ENCODE measurements at regions of chr3 and their contacts with region 1.

Region 1: DNA sequence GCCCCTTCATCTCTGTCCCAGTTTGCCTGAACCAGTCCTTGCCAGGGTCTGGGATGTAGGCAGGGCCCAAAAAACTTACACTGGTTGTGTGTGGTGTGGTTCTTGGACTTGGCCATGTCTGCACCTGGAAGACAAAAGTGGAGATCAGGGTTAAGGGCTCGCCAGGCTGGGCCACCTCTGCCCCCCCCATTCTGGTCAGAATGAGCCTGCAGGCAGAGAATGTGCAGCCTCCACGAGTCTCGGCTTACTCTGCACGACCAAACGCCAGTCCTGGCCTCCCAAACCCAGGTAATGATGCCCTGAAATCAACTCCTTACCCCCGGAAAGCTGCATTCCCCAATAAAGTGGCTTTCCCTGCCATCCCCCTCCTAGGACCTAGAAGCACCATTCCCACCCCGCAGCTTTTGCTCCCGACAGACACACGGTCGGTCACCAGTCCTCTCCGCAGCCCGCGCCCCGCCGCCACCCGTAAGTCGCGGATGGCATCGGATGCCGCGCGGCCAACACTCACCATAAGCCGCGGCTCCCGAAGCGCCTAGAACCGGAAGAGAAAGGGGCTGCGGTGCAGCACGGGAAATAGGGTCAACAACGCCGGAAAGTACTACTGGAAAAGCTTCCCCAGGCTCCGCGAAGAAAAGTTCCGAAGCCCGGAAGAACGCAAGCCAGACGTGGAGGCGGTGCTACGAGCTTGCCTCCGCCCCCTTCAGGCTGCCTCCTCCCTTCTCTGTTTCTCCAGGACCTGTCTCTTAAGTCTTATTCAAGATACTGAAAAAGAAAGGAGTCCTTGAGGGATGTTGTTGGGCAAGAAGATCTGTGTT is at the start of gene RPL29:
- DNase-seq: peak; percentile 90
- ATAC-seq: peak; percentile 72
- H3K4me3 ChIP-seq: peak within 1 kb of the TSS; percentile 82 to 100
- H3K27ac ChIP-seq: peak within 1 kb of the TSS; percentile 88
- H3K4me1 ChIP-seq: peaks cover 13 to 46% of the 10 kb centered on the region in 2 experiments
- H3K27me3 ChIP-seq: no peaks in the 10 kb centered on the region
- CTCF ChIP-seq: no peak
- POLR2A ChIP-seq: peak; percentile 92
- RAD21 ChIP-seq: no peak
- total RNA-seq, gene RPL29: 1,880 TPM

Region 2: DNA sequence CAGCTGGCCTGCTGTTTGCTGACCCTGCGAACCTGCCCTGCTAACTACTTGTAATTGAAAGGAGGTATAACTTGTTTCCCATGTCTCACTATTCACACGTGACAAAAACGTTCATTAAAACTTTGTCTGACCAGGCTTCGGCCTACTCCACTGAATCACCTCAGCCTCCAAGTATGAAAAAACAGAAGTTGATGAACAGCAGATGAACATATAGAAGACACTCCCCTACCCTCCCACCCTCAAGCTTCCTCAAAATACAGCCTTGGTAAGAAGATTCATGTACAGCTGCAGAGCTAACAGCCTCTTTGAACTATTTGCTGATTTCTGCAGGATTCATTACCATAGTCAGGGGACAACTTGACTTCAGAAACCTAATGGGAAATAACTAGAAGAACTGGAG is 593.8 kb before region 1 on chr3:
- CTCF ChIA-PET with region 1: no interaction called
- POLR2A ChIA-PET with region 1: no interaction called
- RAD21 ChIA-PET with region 1: no interaction called
- intact Hi-C with region 1: no loop called
- DNase-seq: no peak
- ATAC-seq: no peak
- H3K4me3 ChIP-seq: no peak overlapping the region
- H3K27ac ChIP-seq: no peak overlapping the region
- H3K4me1 ChIP-seq: no peaks in the 10 kb centered on the region
- H3K27me3 ChIP-seq: no peaks in the 10 kb centered on the region
- CTCF ChIP-seq: no peak
- POLR2A ChIP-seq: no peak
- RAD21 ChIP-seq: no peak

Region 3: DNA sequence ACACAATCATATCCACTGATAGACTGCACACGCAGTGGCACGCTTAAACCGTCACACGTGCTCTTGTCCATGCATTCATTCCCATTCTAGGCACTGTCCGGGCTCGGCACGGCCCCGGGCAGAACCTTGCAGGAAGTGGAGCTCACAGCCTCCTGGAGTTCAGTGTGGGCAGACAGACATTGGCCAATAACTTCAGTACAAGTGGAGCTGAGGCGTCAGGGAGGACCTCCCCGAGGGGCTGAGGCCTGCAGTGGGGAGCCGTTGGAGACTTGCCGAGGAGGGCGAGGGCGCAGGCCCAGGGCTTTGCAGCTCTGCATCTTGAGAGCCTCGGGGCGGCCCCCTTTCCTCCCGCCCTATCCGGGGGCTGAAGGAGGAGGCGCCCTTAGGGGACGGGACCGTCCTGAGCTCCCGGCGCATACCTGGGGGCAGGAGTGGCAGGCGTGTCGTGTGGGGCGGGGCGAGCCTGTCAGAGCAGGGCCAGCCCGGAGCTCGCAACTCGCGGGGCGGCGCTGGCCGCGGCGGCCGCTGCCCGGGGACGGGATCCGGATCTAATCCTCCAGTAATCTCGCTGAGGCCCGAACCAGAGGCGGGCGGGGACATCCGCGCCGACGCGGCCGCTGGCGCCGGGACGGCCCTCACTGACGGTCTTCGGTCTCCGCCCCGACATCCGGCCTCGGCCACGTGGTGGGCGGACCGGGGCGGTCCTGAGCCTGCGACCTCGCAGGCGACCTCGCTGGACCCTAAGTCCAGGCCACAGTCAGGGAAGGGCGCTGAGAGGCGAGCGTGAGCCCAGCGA is 12.6 kb before region 1 on chr3 and contains the start of gene ACY1:
- CTCF ChIA-PET with region 1: interaction called, 8 read pairs
- POLR2A ChIA-PET with region 1: interaction called, 47 read pairs
- RAD21 ChIA-PET with region 1: no interaction called
- intact Hi-C with region 1: no loop called
- DNase-seq: peak; percentile 57
- ATAC-seq: peak; percentile 89
- H3K4me3 ChIP-seq: peak within 1 kb of the TSS; percentile 75 to 86
- H3K27ac ChIP-seq: peak within 1 kb of the TSS; percentile 82
- H3K4me1 ChIP-seq: peaks cover 24 to 56% of the 10 kb centered on the region in 2 experiments
- H3K27me3 ChIP-seq: no peaks in the 10 kb centered on the region
- CTCF ChIP-seq: no peak
- POLR2A ChIP-seq: peak; percentile 18
- RAD21 ChIP-seq: no peak
- total RNA-seq, gene ACY1: 73.2 TPM

Region 4: DNA sequence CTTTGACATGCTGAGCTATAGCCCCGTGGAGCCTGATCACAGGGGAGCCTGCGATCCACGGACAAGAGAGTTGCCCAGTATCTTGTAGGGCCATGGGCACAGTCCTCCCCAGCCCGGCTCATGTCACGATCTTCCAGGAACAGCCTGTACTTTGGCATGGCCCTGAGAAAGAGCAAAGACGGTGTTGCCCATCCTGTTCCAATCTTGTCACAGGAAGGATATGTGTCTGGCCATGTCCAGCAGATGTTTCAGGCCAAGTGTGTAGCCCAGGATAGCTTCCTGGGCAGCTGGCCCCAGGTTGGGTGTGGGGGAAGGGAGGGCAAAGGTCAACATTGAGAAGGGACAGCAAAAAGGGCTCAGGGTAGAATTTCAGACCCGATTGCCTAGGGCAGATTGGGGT is 17.1 kb after region 1 on chr3:
- CTCF ChIA-PET with region 1: interaction called, 3 read pairs
- POLR2A ChIA-PET with region 1: interaction called, 11 read pairs
- RAD21 ChIA-PET with region 1: no interaction called
- intact Hi-C with region 1: no loop called
- DNase-seq: no peak
- ATAC-seq: no peak
- H3K4me3 ChIP-seq: no peak overlapping the region
- H3K27ac ChIP-seq: no peak overlapping the region
- H3K4me1 ChIP-seq: peaks cover 0 to 6% of the 10 kb centered on the region in 2 experiments; a peak in 1 of 4 replicates
- H3K27me3 ChIP-seq: no peaks in the 10 kb centered on the region
- CTCF ChIP-seq: no peak
- POLR2A ChIP-seq: no peak
- RAD21 ChIP-seq: no peak

Region 5: DNA sequence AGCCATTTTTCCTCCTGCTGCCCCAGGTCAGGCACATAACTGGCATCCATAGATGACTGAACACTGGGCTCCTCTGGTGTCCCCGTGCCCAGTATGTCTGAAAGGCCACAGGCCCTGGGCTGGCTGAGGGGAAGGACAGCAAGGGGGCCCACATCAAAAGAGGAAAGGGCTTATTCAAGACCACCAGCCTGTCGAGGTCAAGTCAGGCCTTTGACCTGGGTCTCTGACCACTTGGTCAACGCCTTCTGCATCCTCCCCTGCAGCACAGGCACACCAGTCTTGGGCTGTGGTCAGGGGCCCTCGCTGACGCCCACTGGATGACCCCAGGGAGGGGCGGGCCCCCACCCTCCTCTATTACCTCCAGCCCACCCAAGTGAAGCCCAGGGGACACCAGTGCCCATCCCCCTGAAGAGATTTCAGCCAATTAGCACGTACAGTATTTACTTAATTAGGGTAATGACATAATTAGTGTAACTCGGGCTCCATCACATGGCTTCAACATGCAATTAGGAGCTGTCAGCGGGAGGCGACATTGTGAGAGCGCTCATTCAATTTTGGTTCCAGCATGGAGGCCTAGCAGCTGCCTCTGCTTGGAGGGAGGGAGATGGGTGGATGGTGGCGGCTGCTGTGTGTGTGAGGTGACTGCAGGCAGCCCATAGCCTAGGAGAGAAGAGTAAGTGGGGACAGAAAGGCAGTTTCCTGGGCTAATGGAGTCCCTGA is 307.0 kb after region 1 on chr3:
- CTCF ChIA-PET with region 1: no interaction called
- POLR2A ChIA-PET with region 1: no interaction called
- RAD21 ChIA-PET with region 1: no interaction called
- intact Hi-C with region 1: no loop called
- DNase-seq: no peak
- ATAC-seq: no peak
- H3K4me3 ChIP-seq: no peak overlapping the region
- H3K27ac ChIP-seq: no peak overlapping the region
- H3K4me1 ChIP-seq: peaks cover 0 to 14% of the 10 kb centered on the region in 2 experiments; a peak in 2 of 4 replicates
- H3K27me3 ChIP-seq: no peaks in the 10 kb centered on the region
- CTCF ChIP-seq: no peak
- POLR2A ChIP-seq: no peak
- RAD21 ChIP-seq: no peak

Region 6: DNA sequence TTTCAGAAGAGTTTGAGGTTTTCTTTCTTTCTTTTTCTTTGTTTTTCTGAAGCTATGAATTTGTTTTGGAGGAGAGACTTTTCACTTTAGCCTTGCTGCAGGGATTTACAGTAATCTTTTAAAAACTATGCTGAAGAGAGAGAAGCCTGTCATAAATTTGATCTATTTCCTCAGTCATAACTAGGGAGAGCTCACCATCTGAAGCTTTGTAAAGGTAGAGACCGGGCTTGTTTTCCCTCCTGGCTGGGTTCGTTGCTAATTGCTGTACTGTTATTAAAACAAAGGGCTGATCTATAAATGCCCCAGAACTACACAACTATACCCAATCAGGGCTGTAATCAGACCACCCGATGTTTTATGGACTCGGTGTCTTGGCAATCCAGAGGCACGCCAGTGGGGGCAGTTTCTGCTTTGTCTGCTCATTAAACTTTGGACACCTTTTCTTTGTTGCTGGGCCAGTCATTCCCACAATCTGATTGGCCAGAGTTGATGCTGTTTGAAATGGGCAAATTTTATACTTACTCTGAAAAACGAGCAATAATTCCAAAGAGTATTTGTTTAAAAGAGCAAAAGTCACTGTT is 1663.1 kb after region 1 on chr3:
- CTCF ChIA-PET with region 1: no interaction called
- POLR2A ChIA-PET with region 1: no interaction called
- RAD21 ChIA-PET with region 1: no interaction called
- intact Hi-C with region 1: no loop called
- DNase-seq: no peak
- ATAC-seq: no peak
- H3K4me3 ChIP-seq: no peak overlapping the region
- H3K27ac ChIP-seq: no peak overlapping the region
- H3K4me1 ChIP-seq: no peaks in the 10 kb centered on the region
- H3K27me3 ChIP-seq: no peaks in the 10 kb centered on the region
- CTCF ChIP-seq: no peak
- POLR2A ChIP-seq: no peak
- RAD21 ChIP-seq: no peak